ENCODE measurements at regions of chr6 and their contacts with region 1.

Region 1: DNA sequence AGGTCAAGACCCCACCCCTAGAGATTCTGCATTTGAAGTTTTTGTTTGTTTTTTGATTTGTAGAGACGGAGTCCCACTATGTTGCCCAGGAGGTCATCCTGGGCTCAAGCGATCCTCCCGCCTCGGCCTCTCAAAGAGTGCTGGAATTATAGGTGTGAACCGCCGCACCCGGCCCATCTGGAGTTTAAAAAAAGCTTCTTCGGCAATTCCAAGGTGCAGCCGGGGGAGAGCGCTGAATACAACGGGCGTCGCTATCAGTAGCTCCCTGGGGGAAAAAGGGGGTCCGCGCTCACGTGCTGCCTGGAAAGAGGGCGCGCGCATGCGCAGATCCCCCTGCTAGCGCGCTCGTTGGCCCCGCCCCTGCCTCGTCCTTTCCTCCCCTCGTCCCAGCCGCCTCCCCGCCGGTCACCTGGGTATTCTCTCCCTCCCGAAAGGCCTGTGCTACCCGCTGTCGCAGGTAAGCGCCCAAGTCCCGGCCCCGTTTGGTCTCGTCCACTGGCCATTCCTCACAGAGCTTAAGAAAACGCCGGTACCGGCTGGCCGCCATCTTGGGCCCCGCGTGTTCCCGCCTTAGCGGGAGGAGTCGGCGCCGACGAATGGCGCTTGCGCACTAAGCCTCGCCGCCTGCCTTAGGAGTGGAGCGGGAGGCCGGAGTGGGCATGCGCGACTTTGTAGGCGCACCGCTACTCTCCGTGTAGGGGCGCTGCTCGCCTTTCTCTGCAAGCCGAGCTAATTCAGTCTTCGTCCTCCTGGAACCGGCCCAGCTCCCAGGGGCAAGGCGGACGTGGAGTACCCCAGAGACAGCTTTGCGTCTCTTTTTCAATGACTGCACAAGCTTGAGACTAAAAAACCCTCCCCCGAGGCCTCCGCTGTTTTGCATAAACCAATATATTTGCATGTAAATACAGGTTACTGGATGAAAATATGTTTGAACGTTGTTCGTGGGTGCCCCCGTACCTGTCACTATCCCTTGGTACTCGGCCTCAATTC is at the start of gene UQCC2:
- DNase-seq: peak; percentile 97 to 99 (median 99)
- ATAC-seq: peak; percentile 96 to 99 (median 96)
- H3K4me3 ChIP-seq: peak within 1 kb of the TSS; percentile 35 to 86 (median 76)
- H3K27ac ChIP-seq: peak within 1 kb of the TSS; percentile 80 to 98 (median 94)
- H3K4me1 ChIP-seq: peaks cover 0 to 39% (median 25%) of the 10 kb centered on the region in 12 donors
- H3K27me3 ChIP-seq: no peaks in the 10 kb centered on the region
- CTCF ChIP-seq: peak; percentile 49 to 92 (median 77)
- POLR2A ChIP-seq: peak in 1 of 2 donors; percentile 80
- total RNA-seq, gene UQCC2: 88.5 to 298 (median 195) TPM

Region 2: GRCh38 chr6:33744001-33744848 is 32.8 kb after region 1 on chr6:
- intact Hi-C with region 1: loop called in 2 of 10 experiments (anchors 1 to 2 kb)
- DNase-seq: peak in 4 of 5 donors; percentile 59 to 72 (median 70)
- ATAC-seq: peak in 3 of 4 donors; percentile 6 to 34 (median 20)
- H3K4me3 ChIP-seq: peak overlapping the region in 11 of 12 donors; percentile 42 to 80 (median 57)
- H3K27ac ChIP-seq: peak overlapping the region; percentile 74 to 99 (median 92)
- H3K4me1 ChIP-seq: peaks cover 0 to 68% (median 26%) of the 10 kb centered on the region in 12 donors
- H3K27me3 ChIP-seq: peaks cover 0 to 5% (median 0%) of the 10 kb centered on the region in 9 donors
- CTCF ChIP-seq: peak; percentile 77 to 90 (median 86)
- POLR2A ChIP-seq: peak in 1 of 2 donors; percentile 18

Region 3: DNA sequence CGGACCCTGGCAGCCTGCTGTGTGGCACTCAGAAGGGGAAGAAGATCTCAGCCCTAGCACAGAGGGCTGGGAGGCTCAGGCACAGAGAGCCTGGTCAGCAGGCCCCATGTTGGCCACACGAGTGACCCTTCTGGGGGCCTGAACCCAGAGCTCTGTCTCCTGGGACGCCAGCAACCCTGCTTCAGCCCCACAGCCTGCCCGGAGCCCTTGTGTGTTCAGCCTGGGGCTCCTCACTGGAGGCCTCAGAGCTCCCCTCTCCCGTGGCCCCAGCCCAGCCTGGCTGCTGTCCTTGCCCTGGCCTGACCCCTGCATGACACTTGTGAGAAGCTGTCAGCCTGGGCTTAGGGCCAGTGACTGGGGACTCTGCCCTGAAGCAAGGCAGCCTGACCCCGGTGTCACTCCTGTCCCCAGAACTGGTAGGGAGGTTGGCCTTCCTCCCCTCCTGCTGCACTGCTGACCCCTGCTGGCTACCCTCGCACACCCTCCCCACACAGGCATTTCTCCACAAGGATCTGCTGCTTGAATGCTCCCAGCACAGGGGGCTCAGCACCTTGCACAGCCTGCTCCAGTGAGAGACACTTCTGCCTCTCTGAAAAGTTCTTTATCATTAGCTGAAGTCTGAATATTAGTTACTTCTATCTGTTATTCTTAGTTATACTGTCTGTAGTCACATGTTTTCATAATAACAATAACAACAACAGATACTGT is 50.6 kb after region 1 on chr6:
- intact Hi-C with region 1: loop called (anchors 1 to 10 kb)
- DNase-seq: peak; percentile 79 to 94 (median 88)
- ATAC-seq: peak; percentile 83 to 95 (median 90)
- H3K4me3 ChIP-seq: no peak overlapping the region
- H3K27ac ChIP-seq: peak overlapping the region in 10 of 12 donors; percentile 51 to 86 (median 74)
- H3K4me1 ChIP-seq: peaks cover 0 to 26% (median 15%) of the 10 kb centered on the region in 12 donors
- H3K27me3 ChIP-seq: no peaks in the 10 kb centered on the region
- CTCF ChIP-seq: peak; percentile 56 to 81 (median 68)
- POLR2A ChIP-seq: no peak

Region 4: DNA sequence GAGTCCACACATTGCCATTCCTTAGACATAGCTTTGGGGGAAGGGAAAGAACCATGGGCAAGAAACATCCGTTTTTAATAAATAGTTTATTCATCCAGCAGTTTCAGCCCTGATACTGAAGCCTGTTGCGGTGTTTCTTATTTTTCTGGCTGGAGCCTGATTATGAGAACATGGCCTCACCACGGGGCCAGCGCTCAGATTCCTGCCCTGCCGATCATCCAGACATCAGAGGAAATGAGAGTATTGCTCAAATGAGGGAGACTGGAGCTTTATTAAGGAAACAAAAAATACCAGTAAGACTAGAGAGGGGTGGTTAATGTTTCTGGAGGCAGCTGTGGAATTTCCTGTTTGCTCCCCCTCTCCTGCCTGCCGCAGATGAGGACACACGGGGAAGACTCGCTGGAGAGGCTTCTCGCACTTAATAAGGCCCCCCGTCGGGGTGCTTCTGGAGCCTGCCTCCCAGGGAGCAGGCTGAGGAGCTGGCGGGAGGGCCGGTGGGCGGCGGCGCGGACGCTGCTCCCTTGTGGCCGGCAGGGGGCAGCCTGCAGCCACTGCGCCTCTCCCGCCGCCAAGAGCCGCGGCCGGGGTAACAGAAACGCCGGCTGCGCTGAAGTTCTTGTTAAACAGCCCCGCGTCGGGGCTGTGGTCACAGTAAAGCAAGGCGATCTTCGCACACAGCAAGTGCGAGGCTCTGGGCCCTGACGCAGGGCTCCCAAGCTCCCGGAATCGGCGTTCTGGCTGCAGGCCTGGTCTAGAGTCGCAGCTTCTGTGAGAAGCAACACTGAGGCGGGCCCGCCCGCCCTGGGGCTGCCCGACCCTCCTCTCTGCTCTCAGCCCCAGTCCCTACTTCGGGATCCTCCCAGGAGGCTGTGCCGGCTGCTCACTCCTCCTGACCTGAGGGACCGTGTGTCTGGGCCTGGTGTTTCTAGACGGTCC is 60.0 kb after region 1 on chr6:
- intact Hi-C with region 1: loop called in 1 of 10 experiments (anchors 10 kb)
- DNase-seq: peak; percentile 65 to 88 (median 75)
- ATAC-seq: peak; percentile 44 to 85 (median 76)
- H3K4me3 ChIP-seq: peak overlapping the region in 4 of 12 donors; percentile 8 to 28 (median 18)
- H3K27ac ChIP-seq: peak overlapping the region in 11 of 12 donors; percentile 2 to 74 (median 50)
- H3K4me1 ChIP-seq: peaks cover 0 to 37% (median 27%) of the 10 kb centered on the region in 12 donors
- H3K27me3 ChIP-seq: no peaks in the 10 kb centered on the region
- CTCF ChIP-seq: peak; percentile 92 to 99 (median 97)
- POLR2A ChIP-seq: no peak

Region 5: GRCh38 chr6:33788694-33789549 is 77.5 kb after region 1 on chr6 and contains the start of gene LEMD2:
- intact Hi-C with region 1: loop called in 1 of 10 experiments (anchors 2 kb)
- DNase-seq: peak; percentile 95 to 98 (median 96)
- ATAC-seq: peak; percentile 96 to 98 (median 98)
- H3K4me3 ChIP-seq: peak within 1 kb of the TSS; percentile 66 to 100 (median 95)
- H3K27ac ChIP-seq: peak within 1 kb of the TSS; percentile 95 to 100 (median 98)
- H3K4me1 ChIP-seq: peaks cover 5 to 45% (median 37%) of the 10 kb centered on the region in 12 donors
- H3K27me3 ChIP-seq: no peaks in the 10 kb centered on the region
- CTCF ChIP-seq: peak in 3 of 12 donors; percentile 7 to 21 (median 9)
- POLR2A ChIP-seq: peak in 1 of 2 donors; percentile 84
- total RNA-seq, gene LEMD2: 21.2 to 41.5 (median 25.7) TPM

Region 6: DNA sequence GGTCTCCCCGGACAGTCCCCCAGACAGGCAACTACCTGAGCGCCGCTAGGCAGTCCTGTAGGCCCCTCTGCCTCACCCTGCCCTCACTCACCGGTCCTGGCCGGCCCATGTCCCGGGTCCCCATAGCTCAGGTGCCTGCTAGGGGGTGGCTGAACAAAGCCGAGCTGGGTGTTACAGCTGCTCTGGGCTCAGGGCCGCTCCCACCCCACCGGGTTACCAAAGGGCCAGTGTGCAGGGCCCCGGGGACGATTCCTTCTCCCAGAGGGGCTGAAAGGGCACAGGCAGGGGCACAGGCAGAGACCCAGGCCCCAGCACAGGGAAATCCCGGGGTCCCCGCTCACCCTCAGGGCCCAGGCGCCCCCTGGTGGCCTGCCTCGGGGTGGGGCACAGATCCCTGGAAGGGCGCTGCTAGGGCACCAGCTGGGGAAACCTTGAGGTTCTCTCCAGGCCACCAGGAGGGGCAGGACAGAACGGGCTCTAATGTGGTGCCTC is 316.1 kb after region 1 on chr6:
- intact Hi-C with region 1: loop called in 1 of 10 experiments (anchors 5 kb)
- DNase-seq: peak; percentile 24 to 75 (median 39)
- ATAC-seq: peak in 3 of 4 donors; percentile 44 to 76 (median 61)
- H3K4me3 ChIP-seq: no peak overlapping the region
- H3K27ac ChIP-seq: no peak overlapping the region
- H3K4me1 ChIP-seq: no peaks in the 10 kb centered on the region
- H3K27me3 ChIP-seq: peaks cover 0 to 49% (median 6%) of the 10 kb centered on the region in 9 donors
- CTCF ChIP-seq: peak; percentile 57 to 87 (median 72)
- POLR2A ChIP-seq: no peak

Region 7: GRCh38 chr6:34154668-34155447 is 443.4 kb after region 1 on chr6:
- intact Hi-C with region 1: loop called in 1 of 10 experiments (anchors 10 kb)
- DNase-seq: peak in 4 of 5 donors; percentile 31 to 79 (median 48)
- ATAC-seq: peak; percentile 22 to 86 (median 75)
- H3K4me3 ChIP-seq: peak overlapping the region in 6 of 12 donors; percentile 5 to 30 (median 20)
- H3K27ac ChIP-seq: no peak overlapping the region
- H3K4me1 ChIP-seq: peaks cover 0 to 11% (median 5%) of the 10 kb centered on the region in 12 donors
- H3K27me3 ChIP-seq: peaks cover 12 to 62% (median 55%) of the 10 kb centered on the region in 9 donors
- CTCF ChIP-seq: peak; percentile 92 to 98 (median 96)
- POLR2A ChIP-seq: no peak

Region 8: DNA sequence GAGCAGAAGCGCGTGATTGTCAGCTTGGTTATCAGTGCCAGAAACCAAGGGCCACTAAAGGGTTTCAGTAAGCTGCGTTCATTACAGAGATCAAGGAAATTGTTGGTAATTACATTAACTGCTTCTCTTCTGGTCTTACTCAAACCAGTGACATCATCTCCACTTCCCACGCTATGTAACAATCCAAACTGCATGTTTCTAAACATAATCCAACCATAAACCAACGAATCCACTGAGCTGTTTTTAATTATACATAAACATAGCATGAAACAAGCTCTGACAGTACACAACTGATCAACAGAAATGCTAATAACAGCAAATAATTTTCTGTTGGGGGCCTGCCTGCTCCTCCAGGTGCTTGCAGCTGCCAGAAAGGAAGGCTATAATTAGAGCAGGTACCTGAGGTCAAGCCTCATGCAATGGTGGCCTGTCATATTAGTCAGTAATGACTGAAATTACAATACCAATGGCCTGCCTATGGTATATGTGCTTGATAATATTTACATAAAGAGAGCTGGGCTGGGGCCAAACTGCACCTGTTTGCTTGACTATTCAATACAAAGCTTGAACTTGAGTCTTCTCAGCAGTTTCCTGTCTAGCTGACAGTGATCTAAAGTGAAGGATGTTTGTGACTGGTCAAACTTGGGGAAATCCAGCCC is 945.1 kb after region 1 on chr6:
- intact Hi-C with region 1: no loop called
- DNase-seq: no peak
- ATAC-seq: peak; percentile 43 to 65 (median 56)
- H3K4me3 ChIP-seq: peak overlapping the region in 10 of 12 donors; percentile 34 to 63 (median 50)
- H3K27ac ChIP-seq: peak overlapping the region; percentile 89 to 98 (median 92)
- H3K4me1 ChIP-seq: peaks cover 6 to 71% (median 35%) of the 10 kb centered on the region in 12 donors
- H3K27me3 ChIP-seq: no peaks in the 10 kb centered on the region
- CTCF ChIP-seq: no peak
- POLR2A ChIP-seq: no peak

Measured in heart left ventricle (tissue), 16 donors.